ENCODE measurements at regions of chr9 and their contacts with region 1.

Region 1: DNA sequence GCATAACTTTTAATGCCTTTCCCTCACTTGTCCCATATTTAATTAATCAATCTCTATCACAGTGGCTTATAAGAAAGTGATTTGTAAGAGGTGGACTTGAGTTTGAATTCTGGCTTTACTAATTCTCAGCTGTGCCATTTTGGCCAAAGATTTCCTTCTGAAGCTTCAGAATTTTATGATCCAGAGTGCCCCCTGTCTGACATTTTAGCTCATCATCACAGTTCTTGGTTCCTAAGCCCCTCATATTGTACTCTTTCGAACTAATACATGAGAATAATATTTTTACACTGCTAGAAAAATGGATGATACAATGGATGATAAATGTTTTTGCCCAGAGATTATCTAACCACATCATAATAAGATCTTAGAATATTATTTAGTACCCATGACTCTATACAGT is 1014.1 kb downstream of the PTPRD start:
- DNase-seq: no peak
- ATAC-seq: no peak
- H3K4me3 ChIP-seq: no peak overlapping the region
- H3K4me3 Mint-ChIP-seq: no peak overlapping the region
- H3K27ac ChIP-seq: no peak overlapping the region
- H3K27ac Mint-ChIP-seq: no peak overlapping the region
- H3K4me1 ChIP-seq: no peaks in the 10 kb centered on the region
- H3K4me1 Mint-ChIP-seq: no peaks in the 10 kb centered on the region
- H3K27me3 ChIP-seq: no peaks in the 10 kb centered on the region
- H3K27me3 Mint-ChIP-seq: no peaks in the 10 kb centered on the region
- CTCF ChIP-seq: no peak

Region 2: GRCh38 chr9:9536523-9536922 is 62.2 kb before region 1 on chr9:
- CTCF ChIA-PET with region 1: no interaction called
- POLR2A ChIA-PET with region 1: no interaction called
- intact Hi-C with region 1: loop called (anchors 10 kb)
- DNase-seq: no peak
- ATAC-seq: no peak
- H3K4me3 ChIP-seq: no peak overlapping the region
- H3K4me3 Mint-ChIP-seq: no peak overlapping the region
- H3K27ac ChIP-seq: no peak overlapping the region
- H3K27ac Mint-ChIP-seq: no peak overlapping the region
- H3K4me1 ChIP-seq: no peaks in the 10 kb centered on the region
- H3K4me1 Mint-ChIP-seq: no peaks in the 10 kb centered on the region
- H3K27me3 ChIP-seq: no peaks in the 10 kb centered on the region
- H3K27me3 Mint-ChIP-seq: no peaks in the 10 kb centered on the region
- CTCF ChIP-seq: no peak